Heart right ventricle (tissue), 16 donors: ENCODE measurements at regions of chr5 and their contacts with region 1.

Region 1: DNA sequence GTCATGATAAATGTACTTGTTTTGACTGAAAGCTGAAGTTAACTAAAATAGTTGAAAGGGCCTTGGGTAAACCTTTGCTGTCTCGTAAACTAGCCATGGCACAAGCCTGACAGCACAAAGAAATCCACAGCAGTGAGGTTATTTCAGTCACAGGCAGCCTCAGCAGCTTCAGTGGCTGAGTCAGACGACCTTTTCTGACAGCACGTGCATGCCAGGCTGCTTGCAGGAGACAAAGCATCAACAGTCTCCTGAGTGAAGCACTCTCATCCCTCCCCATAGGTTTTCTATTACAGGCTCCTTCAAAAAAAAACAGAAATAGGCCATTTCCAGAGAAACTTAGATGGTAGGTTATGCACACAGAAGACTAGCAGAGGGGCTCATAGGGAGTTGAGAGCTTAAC is 34.6 kb downstream of the OXCT1 start:
- DNase-seq: peak; percentile 36 to 69
- ATAC-seq: peak; percentile 84 to 99 (median 96)
- H3K4me3 ChIP-seq: no peak overlapping the region
- H3K27ac ChIP-seq: peak overlapping the region; percentile 10 to 83 (median 63)
- H3K4me1 ChIP-seq: peaks cover 0 to 31% (median 20%) of the 10 kb centered on the region in 9 donors
- H3K27me3 ChIP-seq: no peaks in the 10 kb centered on the region
- CTCF ChIP-seq: no peak

Region 2: DNA sequence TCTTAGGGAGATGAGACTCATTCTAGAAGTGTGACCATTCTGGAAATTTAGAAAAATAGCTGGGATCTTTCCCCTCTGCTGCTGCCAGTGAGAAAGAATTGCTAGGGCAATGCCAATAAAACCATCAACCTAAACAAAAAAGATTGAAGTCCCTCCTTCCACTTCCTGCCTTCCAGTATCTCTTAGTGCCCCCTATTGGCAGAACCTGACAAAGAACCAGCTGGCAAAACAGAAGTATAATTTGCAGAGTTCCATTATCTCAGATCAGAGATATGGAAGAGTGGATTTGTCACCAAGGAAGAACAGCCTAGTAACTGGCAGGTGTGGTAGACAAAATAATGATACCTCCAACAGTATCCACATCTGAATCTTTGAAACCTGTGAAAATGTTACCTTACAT is 311.5 kb before region 1 on chr5:
- intact Hi-C with region 1: loop called in 1 of 10 experiments (anchors 10 kb)
- DNase-seq: no peak
- ATAC-seq: no peak
- H3K4me3 ChIP-seq: no peak overlapping the region
- H3K27ac ChIP-seq: no peak overlapping the region
- H3K4me1 ChIP-seq: peaks cover 0 to 14% (median 0%) of the 10 kb centered on the region in 9 donors
- H3K27me3 ChIP-seq: no peaks in the 10 kb centered on the region
- CTCF ChIP-seq: peak in 6 of 9 donors; percentile 6 to 25 (median 21)

Region 3: DNA sequence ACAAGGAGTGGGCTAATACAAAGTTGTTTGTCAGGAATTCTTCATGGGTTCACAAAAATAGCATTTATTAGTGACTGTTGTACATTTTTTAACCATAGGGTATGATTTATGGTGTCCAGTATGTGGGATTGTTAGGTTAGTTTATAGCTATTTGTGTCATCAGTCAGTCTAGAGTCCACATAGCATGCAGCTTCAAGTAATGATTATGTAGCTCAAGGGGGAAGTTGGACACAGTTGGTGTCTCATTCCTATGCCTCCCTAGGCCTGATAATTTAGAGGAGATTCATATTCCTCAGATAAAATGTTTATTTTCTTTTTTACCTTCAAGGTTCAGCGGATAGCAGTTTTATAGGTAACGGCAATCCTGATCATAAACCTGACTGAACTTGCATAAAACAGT is 119.3 kb before region 1 on chr5:
- intact Hi-C with region 1: loop called in 2 of 10 experiments (anchors 5 to 10 kb)
- DNase-seq: no peak
- ATAC-seq: no peak
- H3K4me3 ChIP-seq: no peak overlapping the region
- H3K27ac ChIP-seq: no peak overlapping the region
- H3K4me1 ChIP-seq: no peaks in the 10 kb centered on the region
- H3K27me3 ChIP-seq: no peaks in the 10 kb centered on the region
- CTCF ChIP-seq: no peak

Region 4: DNA sequence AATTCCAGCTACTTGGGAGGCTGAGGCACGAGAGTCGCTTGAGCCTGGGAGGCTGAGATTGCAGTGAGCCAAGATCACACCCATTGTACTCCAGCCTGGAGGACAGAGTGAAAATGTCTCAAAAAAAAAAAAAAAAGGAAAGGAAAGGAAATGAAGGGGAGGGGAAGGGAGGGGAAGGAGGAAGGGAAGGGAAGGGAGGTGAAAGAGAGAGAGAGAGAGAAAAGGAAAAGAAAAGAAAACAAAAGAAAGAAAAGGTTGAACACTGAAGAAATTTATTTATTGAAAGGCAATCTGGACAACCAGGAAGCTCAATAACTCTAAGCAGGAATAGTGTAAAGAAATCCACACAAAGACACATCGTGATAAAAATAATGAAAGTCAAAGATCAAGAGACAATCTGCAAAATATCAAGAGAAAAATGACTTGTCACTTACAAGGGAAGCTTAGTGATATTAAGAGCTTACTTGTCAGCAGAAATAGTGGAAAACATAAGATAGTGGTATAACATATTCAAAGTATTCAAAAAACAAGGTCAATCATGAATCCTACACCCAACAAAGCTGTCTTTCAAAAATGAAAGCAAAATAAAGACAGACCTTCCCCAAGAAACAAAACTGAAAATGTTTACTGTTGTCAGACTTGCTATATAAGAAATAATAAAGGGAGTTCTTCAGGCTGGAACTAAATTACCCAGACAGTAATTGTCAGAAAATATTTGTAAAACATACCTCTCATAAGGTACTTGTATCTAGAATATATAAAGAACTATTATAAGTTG is 57.6 kb after region 1 on chr5:
- intact Hi-C with region 1: no loop called
- DNase-seq: no peak
- ATAC-seq: no peak
- H3K4me3 ChIP-seq: no peak overlapping the region
- H3K27ac ChIP-seq: no peak overlapping the region
- H3K4me1 ChIP-seq: peaks cover 0 to 4% (median 0%) of the 10 kb centered on the region in 9 donors
- H3K27me3 ChIP-seq: peaks cover 0 to 30% (median 8%) of the 10 kb centered on the region in 7 donors
- CTCF ChIP-seq: no peak

Region 5: DNA sequence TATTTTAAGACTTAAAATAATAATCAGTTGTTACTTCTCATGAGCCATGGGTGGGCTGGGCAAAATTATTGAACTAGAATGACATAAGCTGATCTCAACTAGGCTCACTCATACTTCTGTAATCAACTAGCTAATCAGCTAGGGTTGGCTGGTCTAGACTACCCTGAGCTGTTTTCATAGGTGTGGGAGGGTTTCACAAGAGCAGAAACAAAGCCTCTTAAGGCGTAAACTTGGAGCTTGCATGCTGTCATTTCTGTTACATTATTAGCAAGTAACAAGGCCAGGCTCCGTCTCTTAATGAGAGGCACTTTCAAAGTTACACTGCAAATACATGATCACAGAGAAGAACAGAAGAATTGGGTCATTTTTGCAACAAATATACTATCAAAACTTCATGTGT is 530.4 kb after region 1 on chr5:
- intact Hi-C with region 1: no loop called
- DNase-seq: no peak
- ATAC-seq: no peak
- H3K4me3 ChIP-seq: no peak overlapping the region
- H3K27ac ChIP-seq: no peak overlapping the region
- H3K4me1 ChIP-seq: no peaks in the 10 kb centered on the region
- H3K27me3 ChIP-seq: no peaks in the 10 kb centered on the region
- CTCF ChIP-seq: no peak